ENCODE measurements at regions of chr4 and their contacts with region 1.

Region 1: DNA sequence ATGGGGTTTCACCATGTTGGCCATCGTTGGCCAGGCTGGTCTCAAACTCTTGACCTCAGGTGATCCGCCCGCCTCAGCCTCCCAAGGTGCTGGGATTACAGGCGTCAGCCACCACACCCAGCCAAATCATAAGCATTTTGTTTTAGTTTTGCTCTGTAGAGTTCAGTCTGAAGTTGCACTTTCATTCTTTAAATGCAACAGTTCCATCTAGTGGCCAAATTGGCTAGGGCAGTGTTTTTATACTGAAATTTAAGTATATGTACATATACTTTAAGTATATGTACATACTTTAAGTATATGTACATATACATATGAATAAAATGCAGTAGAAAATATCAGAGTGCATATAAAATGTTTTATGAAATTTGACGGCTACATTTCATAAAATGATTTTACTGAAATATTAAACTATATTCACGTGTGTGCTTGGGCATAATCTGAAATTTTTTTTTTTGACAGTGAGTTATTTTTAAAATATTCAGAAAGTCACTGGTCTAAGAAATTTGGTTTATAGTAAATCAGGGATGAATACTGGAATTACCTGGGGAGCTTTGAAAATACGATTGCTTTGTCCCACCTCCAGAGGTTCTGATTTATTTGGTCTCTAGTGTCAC is 145.5 kb downstream of the NWD2 start:
- DNase-seq: peak; percentile 34
- ATAC-seq: peak; percentile 58
- H3K4me3 Mint-ChIP-seq: no peak overlapping the region
- H3K27ac Mint-ChIP-seq: no peak overlapping the region
- H3K4me1 Mint-ChIP-seq: no peaks in the 10 kb centered on the region
- H3K27me3 Mint-ChIP-seq: peaks cover 7% of the 10 kb centered on the region

Region 2: DNA sequence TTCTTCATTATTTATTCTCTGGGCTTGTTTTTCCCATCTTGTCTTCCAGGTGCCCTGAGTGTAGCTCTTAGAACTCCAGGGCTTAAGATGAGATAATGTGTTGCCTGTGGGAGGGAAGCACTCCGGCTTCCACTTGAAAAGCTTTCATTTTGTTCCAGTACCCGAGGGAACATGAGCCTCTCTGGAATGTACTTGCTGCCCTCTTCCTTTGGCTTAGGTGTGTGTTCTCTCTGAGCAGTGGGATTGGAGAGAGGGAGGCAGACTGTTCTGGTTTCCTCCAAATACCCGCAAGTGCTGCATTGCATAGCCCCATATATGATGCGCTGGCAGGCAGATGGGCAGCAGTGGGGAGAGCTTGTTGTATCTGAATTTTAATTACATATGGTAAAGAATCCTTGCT is 1109.5 kb before region 1 on chr4:
- CTCF ChIA-PET with region 1: no interaction called
- POLR2A ChIA-PET with region 1: no interaction called
- intact Hi-C with region 1: no loop called
- DNase-seq: no peak
- ATAC-seq: no peak
- H3K4me3 Mint-ChIP-seq: no peak overlapping the region
- H3K27ac Mint-ChIP-seq: peak overlapping the region; percentile 22
- H3K4me1 Mint-ChIP-seq: peaks cover 71% of the 10 kb centered on the region
- H3K27me3 Mint-ChIP-seq: peaks cover 3% of the 10 kb centered on the region

Region 3: DNA sequence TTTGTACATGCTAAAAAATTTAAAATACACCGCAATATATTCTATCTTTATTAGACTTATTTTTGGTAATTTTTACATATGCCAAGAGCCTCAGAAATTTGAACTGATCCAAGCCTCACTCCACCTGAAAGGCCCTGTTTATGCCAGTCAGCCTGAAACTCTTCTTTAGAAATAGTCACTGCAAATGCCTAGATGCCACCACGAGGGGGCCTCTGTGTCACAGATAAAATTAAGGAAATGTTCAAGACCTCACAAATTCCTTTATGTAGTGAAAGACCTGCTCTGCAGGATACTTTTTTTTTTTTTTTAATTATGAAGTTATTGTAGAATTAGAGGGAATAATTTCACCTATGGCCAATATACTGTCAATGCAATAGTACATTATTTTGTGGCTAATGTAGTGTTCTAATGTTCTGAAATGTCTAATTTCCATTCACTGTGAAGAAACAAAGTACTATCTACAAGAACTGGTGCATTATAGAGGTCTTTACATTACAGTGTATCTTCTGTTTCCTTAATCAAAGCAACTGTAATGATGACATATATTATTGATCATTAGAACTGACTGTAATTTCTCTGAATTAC is 1038.9 kb before region 1 on chr4:
- CTCF ChIA-PET with region 1: interaction called, 4 read pairs
- POLR2A ChIA-PET with region 1: no interaction called
- intact Hi-C with region 1: loop called (anchors 2 to 10 kb)
- DNase-seq: peak; percentile 87
- ATAC-seq: peak; percentile 58
- H3K4me3 Mint-ChIP-seq: no peak overlapping the region
- H3K27ac Mint-ChIP-seq: no peak overlapping the region
- H3K4me1 Mint-ChIP-seq: peaks cover 23% of the 10 kb centered on the region
- H3K27me3 Mint-ChIP-seq: peaks cover 3% of the 10 kb centered on the region

Region 4: GRCh38 chr4:36414248-36414647 is 975.8 kb before region 1 on chr4:
- CTCF ChIA-PET with region 1: interaction called, 4 read pairs
- POLR2A ChIA-PET with region 1: no interaction called
- intact Hi-C with region 1: loop called (anchors 2 to 5 kb)
- DNase-seq: no peak
- ATAC-seq: no peak
- H3K4me3 Mint-ChIP-seq: no peak overlapping the region
- H3K27ac Mint-ChIP-seq: no peak overlapping the region
- H3K4me1 Mint-ChIP-seq: no peaks in the 10 kb centered on the region
- H3K27me3 Mint-ChIP-seq: peaks cover 27% of the 10 kb centered on the region

Region 5: DNA sequence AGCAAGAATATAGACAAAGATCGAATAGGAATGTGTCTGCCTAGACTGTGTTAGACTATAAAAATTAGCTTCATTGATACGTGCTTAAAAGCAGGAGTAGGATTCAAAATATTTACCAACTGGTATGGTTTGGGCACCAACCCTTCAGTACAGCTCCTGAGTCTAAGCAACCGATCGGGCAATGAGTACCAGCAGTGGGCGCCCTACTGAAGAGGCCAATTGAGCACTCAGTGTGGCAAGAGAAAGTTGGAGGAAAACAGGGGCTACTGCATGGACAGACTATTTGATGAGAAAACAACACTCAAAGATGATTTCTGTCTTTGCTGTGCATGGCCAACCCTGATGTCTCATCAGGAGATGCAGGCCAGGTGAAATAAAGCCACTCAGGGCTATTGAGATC is 321.5 kb before region 1 on chr4:
- CTCF ChIA-PET with region 1: no interaction called
- POLR2A ChIA-PET with region 1: no interaction called
- intact Hi-C with region 1: loop called (anchors 10 kb)
- DNase-seq: peak; percentile 16
- ATAC-seq: no peak
- H3K4me3 Mint-ChIP-seq: no peak overlapping the region
- H3K27ac Mint-ChIP-seq: no peak overlapping the region
- H3K4me1 Mint-ChIP-seq: peaks cover 5% of the 10 kb centered on the region
- H3K27me3 Mint-ChIP-seq: no peaks in the 10 kb centered on the region

Region 6: GRCh38 chr4:37095925-37096324 is 294.1 kb before region 1 on chr4:
- CTCF ChIA-PET with region 1: no interaction called
- POLR2A ChIA-PET with region 1: no interaction called
- intact Hi-C with region 1: no loop called
- DNase-seq: no peak
- ATAC-seq: no peak
- H3K4me3 Mint-ChIP-seq: no peak overlapping the region
- H3K27ac Mint-ChIP-seq: no peak overlapping the region
- H3K4me1 Mint-ChIP-seq: no peaks in the 10 kb centered on the region
- H3K27me3 Mint-ChIP-seq: peaks cover 3% of the 10 kb centered on the region

Region 7: GRCh38 chr4:37715889-37716402 is 325.9 kb after region 1 on chr4:
- CTCF ChIA-PET with region 1: no interaction called
- POLR2A ChIA-PET with region 1: no interaction called
- intact Hi-C with region 1: no loop called
- DNase-seq: peak; percentile 70
- ATAC-seq: peak; percentile 87
- H3K4me3 Mint-ChIP-seq: no peak overlapping the region
- H3K27ac Mint-ChIP-seq: peak overlapping the region; percentile 34
- H3K4me1 Mint-ChIP-seq: peaks cover 18% of the 10 kb centered on the region
- H3K27me3 Mint-ChIP-seq: no peaks in the 10 kb centered on the region

Measured in activated CD4-positive, alpha-beta T cell treated with anti-CD3 and anti-CD28 coated beads for 36 hours (primary cell).